ENCODE measurements at regions of chr9 and their contacts with region 1.

Region 1: DNA sequence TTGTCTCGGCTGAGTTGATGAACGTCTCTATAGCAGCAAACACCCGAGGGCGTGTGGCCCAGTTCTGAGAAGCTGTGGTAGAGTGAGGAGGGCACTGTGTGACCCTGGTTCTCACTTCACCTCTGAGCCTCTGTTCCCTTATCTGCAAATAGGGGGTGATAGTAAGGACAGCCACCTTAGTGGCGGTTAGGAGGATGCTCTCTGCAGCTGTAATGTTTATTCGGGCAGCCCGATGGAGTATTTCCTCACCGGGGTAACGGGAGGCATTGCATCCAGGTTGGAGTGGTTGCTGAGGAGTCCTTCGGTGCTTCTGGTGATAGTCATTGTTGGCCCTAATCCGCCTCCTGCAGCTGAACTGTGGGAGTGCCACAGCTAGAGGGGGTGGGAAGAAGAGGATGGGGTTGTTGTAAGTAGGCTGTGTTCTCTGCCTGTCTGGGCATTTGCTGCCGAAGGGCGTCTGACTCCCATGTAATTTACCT is 13.9 kb downstream of the PRRC2B start:
- DNase-seq: peak; percentile 25 to 76 (median 57)
- ATAC-seq: peak; percentile 60 to 77
- H3K4me3 Mint-ChIP-seq: peak overlapping the region; percentile 63 to 91 (median 84)
- H3K27ac Mint-ChIP-seq: peak overlapping the region; percentile 84 to 94 (median 92)
- H3K4me1 Mint-ChIP-seq: peaks cover 55 to 95% (median 90%) of the 10 kb centered on the region in 4 donors
- H3K27me3 Mint-ChIP-seq: no peaks in the 10 kb centered on the region

Region 2: GRCh38 chr9:131349881-131350563 is 57.7 kb before region 1 on chr9:
- POLR2A ChIA-PET with region 1: interaction called, 29 read pairs
- DNase-seq: peak; percentile 75 to 94 (median 84)
- ATAC-seq: peak; percentile 98 to 99
- H3K4me3 Mint-ChIP-seq: peak overlapping the region; percentile 20 to 63 (median 48)
- H3K27ac Mint-ChIP-seq: peak overlapping the region in 8 of 10 donors; percentile 24 to 81 (median 74)
- H3K4me1 Mint-ChIP-seq: peaks cover 2 to 11% (median 8%) of the 10 kb centered on the region in 4 donors
- H3K27me3 Mint-ChIP-seq: no peaks in the 10 kb centered on the region

Region 3: DNA sequence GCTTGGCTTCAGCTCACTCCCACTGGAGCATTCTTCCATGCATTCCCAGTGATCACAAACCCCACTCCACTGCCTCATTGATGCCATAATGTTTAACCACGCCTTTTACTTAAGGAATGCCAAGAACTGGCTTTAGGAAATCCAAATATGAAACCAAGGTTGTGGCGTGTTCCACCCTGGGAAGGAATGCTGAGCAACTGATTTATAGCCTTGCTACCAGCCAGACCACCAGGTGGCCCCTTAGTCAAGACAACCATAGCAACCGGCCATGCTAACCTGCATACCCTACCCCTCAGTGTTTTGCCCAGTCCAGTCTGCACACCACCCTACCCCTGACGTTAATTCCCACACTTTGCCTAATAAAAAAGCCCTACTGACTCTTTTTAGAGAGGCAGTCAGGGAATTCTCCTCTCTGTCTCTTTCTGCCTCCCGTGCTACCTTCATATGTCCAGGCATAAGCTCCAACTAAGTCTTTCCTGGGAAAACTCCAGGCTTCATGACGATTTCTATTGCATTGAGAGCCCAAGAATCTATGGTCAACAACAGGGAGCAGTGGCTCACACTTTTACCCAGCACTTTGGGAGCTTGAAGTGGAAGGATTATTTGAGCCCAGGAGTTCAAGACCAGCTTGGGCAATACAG is 40.9 kb before region 1 on chr9:
- POLR2A ChIA-PET with region 1: interaction called, 40 read pairs
- DNase-seq: no peak
- ATAC-seq: no peak
- H3K4me3 Mint-ChIP-seq: no peak overlapping the region
- H3K27ac Mint-ChIP-seq: peak overlapping the region in 7 of 10 donors; percentile 24 to 70 (median 37)
- H3K4me1 Mint-ChIP-seq: peaks cover 7 to 47% (median 10%) of the 10 kb centered on the region in 4 donors
- H3K27me3 Mint-ChIP-seq: no peaks in the 10 kb centered on the region

Region 4: GRCh38 chr9:131393622-131394463 is 13.9 kb before region 1 on chr9 and contains the start of gene PRRC2B:
- POLR2A ChIA-PET with region 1: interaction called, 73 read pairs
- DNase-seq: peak; percentile 74 to 90 (median 82)
- ATAC-seq: peak; percentile 38 to 50
- H3K4me3 Mint-ChIP-seq: peak within 1 kb of the TSS; percentile 93 to 97 (median 94)
- H3K27ac Mint-ChIP-seq: peak within 1 kb of the TSS; percentile 93 to 98 (median 96)
- H3K4me1 Mint-ChIP-seq: peaks cover 27 to 47% (median 47%) of the 10 kb centered on the region in 4 donors
- H3K27me3 Mint-ChIP-seq: no peaks in the 10 kb centered on the region
- polyA plus RNA-seq, gene PRRC2B: 13.4 to 56.3 (median 27.9) TPM

Region 5: GRCh38 chr9:131418143-131419028 is 10.6 kb after region 1 on chr9:
- POLR2A ChIA-PET with region 1: interaction called, 13 read pairs
- DNase-seq: no peak
- ATAC-seq: peak in 1 of 2 donors; percentile 4
- H3K4me3 Mint-ChIP-seq: peak overlapping the region; percentile 42 to 84 (median 80)
- H3K27ac Mint-ChIP-seq: peak overlapping the region; percentile 79 to 93 (median 86)
- H3K4me1 Mint-ChIP-seq: peaks cover 57 to 99% (median 97%) of the 10 kb centered on the region in 4 donors
- H3K27me3 Mint-ChIP-seq: no peaks in the 10 kb centered on the region

Measured in naive thymus-derived CD8-positive, alpha-beta T cell (primary cell).